Caco-2 (cell line): ENCODE measurements at regions of chr11 and their contacts with region 1.

Region 1: DNA sequence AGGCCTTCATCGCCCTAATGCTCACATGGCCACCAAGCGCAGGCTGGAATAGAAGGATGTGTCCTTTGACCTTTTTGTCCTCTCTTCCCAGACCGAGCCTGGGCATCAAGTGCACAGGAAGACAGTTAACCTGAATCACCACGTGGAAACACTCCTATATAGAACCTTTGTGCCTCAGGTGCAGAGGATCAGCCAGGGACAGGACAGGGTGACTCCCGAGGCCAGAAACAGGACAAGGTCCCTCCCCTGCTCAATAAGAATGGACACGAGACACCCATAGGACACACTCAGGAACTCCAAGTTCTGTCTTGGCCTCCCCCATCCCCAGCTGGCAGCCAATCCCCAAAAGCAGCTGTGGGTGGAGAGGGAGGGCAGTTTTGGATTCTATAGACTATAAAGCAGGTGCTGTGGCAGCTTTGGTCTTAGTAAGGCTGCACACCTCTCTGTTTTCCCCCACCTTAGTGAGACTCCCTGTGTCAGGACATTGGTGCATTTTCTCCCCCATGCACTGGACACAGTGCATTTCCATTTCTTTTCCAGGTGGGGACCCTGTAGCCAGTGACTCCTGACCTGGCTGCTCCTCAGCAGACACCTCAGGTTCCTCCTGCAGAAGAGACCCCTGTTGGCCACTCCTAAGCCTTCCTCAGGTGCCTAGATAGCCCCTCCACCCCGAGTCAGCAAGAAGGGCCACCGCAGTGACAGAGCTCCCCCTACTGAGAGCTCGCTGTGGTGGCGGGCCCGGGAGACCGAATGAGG is 43.6 kb upstream of the POU2AF1 start:
- DNase-seq: peak; percentile 94 to 95
- H3K4me3 ChIP-seq: no peak overlapping the region
- H3K4me3 Mint-ChIP-seq: no peak overlapping the region
- H3K27ac Mint-ChIP-seq: peak overlapping the region; percentile 38
- H3K4me1 ChIP-seq: peaks cover 11% of the 10 kb centered on the region
- H3K4me1 Mint-ChIP-seq: peaks cover 12% of the 10 kb centered on the region
- H3K27me3 ChIP-seq: no peaks in the 10 kb centered on the region
- H3K27me3 Mint-ChIP-seq: no peaks in the 10 kb centered on the region
- CTCF ChIP-seq: peak; percentile 100

Region 2: GRCh38 chr11:111230122-111230465 is 192.6 kb before region 1 on chr11:
- CTCF ChIA-PET with region 1: no interaction called
- POLR2A ChIA-PET with region 1: interaction called, 4 read pairs
- intact Hi-C with region 1: loop called (anchors 2 kb)
- DNase-seq: no peak
- H3K4me3 ChIP-seq: no peak overlapping the region
- H3K4me3 Mint-ChIP-seq: peak overlapping the region; percentile 62
- H3K27ac Mint-ChIP-seq: no peak overlapping the region
- H3K4me1 ChIP-seq: no peaks in the 10 kb centered on the region
- H3K4me1 Mint-ChIP-seq: no peaks in the 10 kb centered on the region
- H3K27me3 ChIP-seq: no peaks in the 10 kb centered on the region
- H3K27me3 Mint-ChIP-seq: peaks cover 23% of the 10 kb centered on the region
- CTCF ChIP-seq: no peak

Region 3: DNA sequence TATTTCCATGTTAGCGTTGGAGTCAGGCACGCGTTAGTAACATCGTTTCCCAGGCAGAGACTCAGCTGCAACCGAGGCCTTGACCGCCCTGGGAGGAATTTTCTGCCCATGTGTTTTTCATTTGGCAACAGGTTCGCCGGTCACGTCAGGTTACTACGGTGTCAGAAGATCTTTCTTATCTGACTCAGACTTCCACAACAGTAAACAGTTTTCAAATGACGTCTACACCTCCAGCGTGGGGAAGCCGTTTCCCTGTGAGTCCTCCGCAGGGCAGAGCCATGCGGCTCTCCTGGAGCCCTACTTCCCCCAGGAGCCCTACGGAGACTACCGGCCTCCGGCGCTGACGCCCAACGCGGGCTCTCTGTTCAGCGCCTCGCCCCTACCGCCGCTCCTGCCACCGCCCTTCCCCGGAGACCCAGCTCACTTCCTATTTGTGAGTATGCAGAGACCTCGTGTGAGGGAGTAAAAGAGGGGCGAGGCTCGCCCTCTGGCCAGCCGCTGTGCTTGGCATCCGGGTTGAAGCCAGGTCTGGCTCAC is 138.7 kb before region 1 on chr11:
- CTCF ChIA-PET with region 1: interaction called, 99 read pairs
- POLR2A ChIA-PET with region 1: no interaction called
- intact Hi-C with region 1: loop called (anchors 1 kb)
- DNase-seq: no peak
- H3K4me3 ChIP-seq: no peak overlapping the region
- H3K4me3 Mint-ChIP-seq: no peak overlapping the region
- H3K27ac Mint-ChIP-seq: peak overlapping the region; percentile 14
- H3K4me1 ChIP-seq: peaks cover 44% of the 10 kb centered on the region
- H3K4me1 Mint-ChIP-seq: peaks cover 29% of the 10 kb centered on the region
- H3K27me3 ChIP-seq: no peaks in the 10 kb centered on the region
- H3K27me3 Mint-ChIP-seq: no peaks in the 10 kb centered on the region
- CTCF ChIP-seq: no peak

Region 4: DNA sequence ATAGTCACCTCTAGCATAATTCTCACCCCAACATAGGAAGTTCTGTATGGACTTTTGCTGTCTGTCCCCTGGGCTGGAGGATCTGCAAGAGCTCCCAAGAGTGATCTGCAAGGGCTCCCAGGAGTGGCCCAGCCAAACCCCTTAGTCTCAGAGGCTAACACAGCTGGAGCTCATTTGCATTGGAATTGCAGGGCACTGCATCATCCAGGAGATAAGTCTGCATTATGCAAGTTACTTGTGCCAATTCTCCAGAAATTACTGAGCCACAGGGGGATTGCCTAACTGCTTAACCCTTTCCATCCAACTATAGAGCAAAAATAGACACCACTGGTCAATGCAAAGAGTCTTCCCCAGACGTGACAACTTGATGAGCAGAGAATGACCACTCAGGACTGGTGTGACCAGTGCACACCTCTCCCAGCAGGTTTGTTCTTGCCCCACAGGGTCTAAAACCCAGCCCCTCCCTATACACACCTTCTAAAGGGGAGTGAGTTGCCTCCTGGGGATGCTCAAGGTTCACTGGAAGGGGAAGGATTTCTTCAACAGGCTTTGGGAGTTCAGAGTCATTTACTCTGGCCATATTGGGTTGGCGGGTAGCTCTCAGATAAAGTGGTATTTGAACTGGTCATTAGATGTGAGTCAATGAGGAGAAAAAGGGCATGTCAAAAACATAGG is 86.0 kb before region 1 on chr11:
- CTCF ChIA-PET with region 1: interaction called, 31 read pairs
- POLR2A ChIA-PET with region 1: no interaction called
- intact Hi-C with region 1: loop called (anchors 1 kb)
- DNase-seq: peak; percentile 87 to 88
- H3K4me3 ChIP-seq: no peak overlapping the region
- H3K4me3 Mint-ChIP-seq: peak overlapping the region; percentile 16
- H3K27ac Mint-ChIP-seq: peak overlapping the region; percentile 86
- H3K4me1 ChIP-seq: peaks cover 58% of the 10 kb centered on the region
- H3K4me1 Mint-ChIP-seq: peaks cover 57% of the 10 kb centered on the region
- H3K27me3 ChIP-seq: no peaks in the 10 kb centered on the region
- H3K27me3 Mint-ChIP-seq: no peaks in the 10 kb centered on the region
- CTCF ChIP-seq: no peak

Region 5: GRCh38 chr11:111446404-111447111 is 23.9 kb after region 1 on chr11:
- CTCF ChIA-PET with region 1: interaction called, 8 read pairs
- POLR2A ChIA-PET with region 1: no interaction called
- intact Hi-C with region 1: loop called (anchors 1 kb)
- DNase-seq: peak; percentile 91
- H3K4me3 ChIP-seq: no peak overlapping the region
- H3K4me3 Mint-ChIP-seq: no peak overlapping the region
- H3K27ac Mint-ChIP-seq: no peak overlapping the region
- H3K4me1 ChIP-seq: no peaks in the 10 kb centered on the region; the same call in 1 of the 2 replicates
- H3K4me1 Mint-ChIP-seq: no peaks in the 10 kb centered on the region
- H3K27me3 ChIP-seq: peaks cover 2% of the 10 kb centered on the region; the same call in 1 of the 2 replicates
- H3K27me3 Mint-ChIP-seq: peaks cover 2% of the 10 kb centered on the region
- CTCF ChIP-seq: peak; percentile 96 to 99